Heart left ventricle (tissue), 16 donors: ENCODE measurements at regions of chr22 and their contacts with region 1.

Region 1: GRCh38 chr22:26589845-26590736 is at the start of gene TPST2:
- DNase-seq: peak; percentile 80 to 92 (median 83)
- ATAC-seq: peak; percentile 83 to 95 (median 94)
- H3K4me3 ChIP-seq: peak within 1 kb of the TSS; percentile 79 to 98 (median 92)
- H3K27ac ChIP-seq: peak within 1 kb of the TSS in 11 of 12 donors; percentile 77 to 91 (median 89)
- H3K4me1 ChIP-seq: peaks cover 3 to 66% (median 24%) of the 10 kb centered on the region in 12 donors
- H3K27me3 ChIP-seq: no peaks in the 10 kb centered on the region
- CTCF ChIP-seq: peak in 3 of 12 donors; percentile 6 to 29 (median 17)
- POLR2A ChIP-seq: peak; percentile 71 to 92
- total RNA-seq, gene TPST2: 12.1 to 103 (median 25.2) TPM

Region 2: GRCh38 chr22:26511857-26512793 is 78.0 kb before region 1 on chr22 and contains the start of gene TFIP11:
- intact Hi-C with region 1: loop called in 8 of 10 experiments (anchors 2 to 10 kb)
- DNase-seq: peak; percentile 94 to 98 (median 95)
- ATAC-seq: peak; percentile 98 to 100 (median 100)
- H3K4me3 ChIP-seq: peak within 1 kb of the TSS; percentile 59 to 99 (median 84)
- H3K27ac ChIP-seq: peak within 1 kb of the TSS in 11 of 12 donors; percentile 72 to 93 (median 82)
- H3K4me1 ChIP-seq: peaks cover 0 to 30% (median 20%) of the 10 kb centered on the region in 12 donors
- H3K27me3 ChIP-seq: no peaks in the 10 kb centered on the region
- CTCF ChIP-seq: no peak
- POLR2A ChIP-seq: peak in 1 of 2 donors; percentile 70
- total RNA-seq, gene TFIP11: 15.1 to 28.0 (median 23.1) TPM

Region 3: DNA sequence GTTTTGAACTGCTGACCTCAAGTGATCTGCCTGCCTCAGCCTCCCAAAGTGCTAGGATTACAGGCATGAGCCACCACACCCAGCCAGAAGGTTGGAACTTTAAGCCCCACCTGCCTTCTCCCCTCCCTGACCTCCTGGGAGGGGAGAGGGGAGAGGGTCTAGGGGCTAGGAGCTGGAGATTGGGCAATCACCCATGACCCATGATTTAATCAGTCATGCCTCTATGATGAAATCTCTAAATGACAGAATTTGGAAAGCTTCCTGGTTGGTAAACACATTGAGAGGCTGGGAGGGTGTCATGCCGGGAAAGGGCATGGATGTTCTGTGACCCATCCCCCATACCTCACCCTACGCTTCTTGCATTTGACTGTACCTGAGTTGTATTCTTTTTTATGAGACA is 60.7 kb before region 1 on chr22:
- intact Hi-C with region 1: no loop called
- DNase-seq: no peak
- ATAC-seq: peak in 1 of 4 donors; percentile 16
- H3K4me3 ChIP-seq: no peak overlapping the region
- H3K27ac ChIP-seq: peak overlapping the region in 4 of 12 donors; percentile 60 to 87 (median 81)
- H3K4me1 ChIP-seq: peaks cover 0 to 38% (median 13%) of the 10 kb centered on the region in 12 donors
- H3K27me3 ChIP-seq: no peaks in the 10 kb centered on the region
- CTCF ChIP-seq: no peak
- POLR2A ChIP-seq: no peak

Region 4: DNA sequence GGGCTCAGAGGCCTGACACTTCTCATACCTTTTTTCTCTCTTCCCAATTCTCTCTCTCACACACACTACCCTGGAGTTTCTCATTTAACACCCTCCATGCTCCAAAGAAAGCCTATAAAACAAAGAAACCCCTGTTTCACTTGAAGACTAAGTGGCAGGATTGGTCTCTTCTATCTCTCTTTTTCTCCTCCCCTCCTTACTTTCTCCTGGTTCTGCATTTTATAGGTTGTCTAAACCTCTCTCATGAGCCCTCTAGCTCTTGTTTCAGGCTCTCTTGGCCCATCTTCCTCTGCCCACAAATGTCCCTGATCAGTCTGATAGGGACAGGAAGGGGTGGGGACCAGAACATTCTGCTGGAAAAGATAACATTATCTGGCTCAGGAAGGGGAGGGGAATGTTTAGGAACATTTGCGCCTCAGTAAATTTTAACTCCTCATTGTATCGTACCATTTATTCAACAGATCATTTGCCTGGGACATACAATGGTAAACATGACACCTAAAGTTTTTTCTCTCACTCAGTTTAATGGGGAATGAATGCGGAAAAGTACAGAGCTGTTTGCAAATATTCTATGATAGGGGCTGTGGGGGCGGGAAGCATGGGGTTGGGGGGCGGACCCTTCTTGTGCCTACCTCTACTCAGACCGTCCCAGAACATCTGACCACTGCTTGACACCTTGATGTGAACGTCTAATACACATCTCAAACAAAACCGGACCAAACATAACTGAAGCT is 42.5 kb after region 1 on chr22:
- intact Hi-C with region 1: loop called in 2 of 10 experiments (anchors 5 kb)
- DNase-seq: peak in 1 of 5 donors; percentile 45
- ATAC-seq: peak; percentile 84 to 96 (median 87)
- H3K4me3 ChIP-seq: no peak overlapping the region
- H3K27ac ChIP-seq: peak overlapping the region; percentile 47 to 88 (median 75)
- H3K4me1 ChIP-seq: peaks cover 0 to 7% (median 0%) of the 10 kb centered on the region in 12 donors
- H3K27me3 ChIP-seq: no peaks in the 10 kb centered on the region
- CTCF ChIP-seq: no peak
- POLR2A ChIP-seq: no peak